Left cardiac atrium (tissue), 4 donors: ENCODE measurements at regions of chr4 and their contacts with region 1.

Region 1: DNA sequence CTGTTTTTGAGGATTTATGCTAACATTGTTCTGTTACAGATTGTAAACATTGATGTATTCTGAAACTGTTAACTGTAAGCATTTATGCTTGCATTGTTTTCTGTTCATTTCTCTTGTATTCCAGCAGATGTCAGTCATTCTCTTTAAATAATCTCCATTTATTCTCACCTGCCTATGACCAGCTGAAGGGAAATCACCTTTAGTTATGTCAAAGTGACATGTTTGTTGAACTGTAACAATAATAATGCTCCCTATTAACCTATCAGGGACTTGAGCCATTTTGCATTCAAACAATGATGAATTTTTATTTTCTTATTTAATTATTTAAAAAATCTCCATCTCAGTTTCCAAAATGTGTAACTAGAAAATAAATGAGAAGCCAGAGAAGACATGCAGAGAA is 58.0 kb downstream of the SPCS3 start:
- DNase-seq: no peak
- ATAC-seq: no peak

Region 2: DNA sequence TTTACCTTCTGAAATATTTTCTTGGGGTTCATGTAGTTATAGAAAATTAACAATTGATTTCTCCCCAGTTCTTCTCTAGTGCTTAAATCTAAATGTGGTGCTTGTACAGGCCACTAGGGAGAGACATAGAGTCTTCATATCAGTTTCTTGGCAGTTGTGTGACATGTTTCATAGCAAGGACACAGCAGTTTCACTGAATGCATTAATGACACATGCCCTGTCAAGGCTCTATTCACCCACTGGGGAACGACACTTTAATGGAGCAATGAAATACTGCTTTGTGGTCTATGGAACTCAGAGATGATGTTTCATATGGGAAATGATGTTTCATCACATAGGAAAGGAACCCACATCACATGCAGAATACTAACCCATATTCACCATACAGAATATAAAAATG is 412.2 kb after region 1 on chr4:
- intact Hi-C with region 1: loop called in 1 of 2 experiments (anchors 5 kb)
- DNase-seq: no peak
- ATAC-seq: no peak